ENCODE measurements at regions of chr11 and their contacts with region 1.

Region 1: GRCh38 chr11:94623120-94623735 is 56.1 kb downstream of the PIWIL4 start:
- DNase-seq: peak; percentile 67 to 87
- H3K4me3 ChIP-seq: no peak overlapping the region
- H3K27ac ChIP-seq: 0 out of 2 replicates have a peak overlapping the region, but pooled peaks have one; percentile 12
- H3K4me1 ChIP-seq: peaks cover 5% of the 10 kb centered on the region; the same call in 1 of the 2 replicates
- H3K27me3 ChIP-seq: no peaks in the 10 kb centered on the region
- CTCF ChIP-seq: peak; percentile 99

Region 2: GRCh38 chr11:93842461-93842860 is 780.8 kb before region 1 on chr11:
- CTCF ChIA-PET with region 1: no interaction called
- POLR2A ChIA-PET with region 1: no interaction called
- intact Hi-C with region 1: no loop called
- DNase-seq: peak; percentile 90 to 91
- H3K4me3 ChIP-seq: no peak overlapping the region
- H3K27ac ChIP-seq: no peak overlapping the region
- H3K4me1 ChIP-seq: peaks cover 10% of the 10 kb centered on the region
- H3K27me3 ChIP-seq: no peaks in the 10 kb centered on the region
- CTCF ChIP-seq: no peak

Region 3: DNA sequence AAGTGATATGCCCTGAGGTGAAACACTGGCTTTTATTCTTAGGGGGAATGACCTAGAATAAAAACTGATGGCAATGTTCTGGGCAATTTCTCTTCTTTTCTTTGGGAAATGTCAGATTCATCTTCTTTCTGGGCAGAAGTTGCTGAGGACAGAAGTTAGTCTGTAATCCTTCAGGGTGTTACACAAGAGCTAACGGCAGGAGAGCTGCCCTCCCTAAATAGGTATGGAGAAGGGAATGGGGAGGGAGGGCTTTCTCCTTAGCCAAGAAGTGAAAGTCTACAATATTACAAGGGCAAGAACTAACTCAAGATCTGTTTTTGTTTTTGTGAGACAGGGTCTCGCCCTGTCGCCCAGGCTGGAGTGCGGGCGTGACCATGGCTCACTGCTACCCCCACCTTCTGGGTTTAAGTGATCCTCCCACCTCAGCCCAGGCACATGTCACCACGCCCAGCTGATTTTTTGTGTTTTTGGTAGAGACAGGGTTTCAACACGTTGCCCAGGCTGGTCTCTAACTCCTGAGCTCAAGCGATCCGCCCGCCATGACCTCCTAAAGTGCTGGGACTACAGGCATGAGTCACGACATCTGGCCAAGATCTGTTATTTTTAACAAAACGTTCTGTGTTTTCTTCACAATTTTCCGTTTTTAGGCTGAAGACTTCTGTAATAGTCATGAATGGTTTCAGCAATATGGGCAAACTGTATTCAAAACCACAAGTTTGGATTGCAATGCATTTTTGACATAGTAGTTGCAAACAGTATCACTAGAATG is 48.9 kb before region 1 on chr11:
- CTCF ChIA-PET with region 1: no interaction called
- POLR2A ChIA-PET with region 1: no interaction called
- intact Hi-C with region 1: no loop called
- DNase-seq: no peak
- H3K4me3 ChIP-seq: no peak overlapping the region
- H3K27ac ChIP-seq: no peak overlapping the region
- H3K4me1 ChIP-seq: no peaks in the 10 kb centered on the region
- H3K27me3 ChIP-seq: no peaks in the 10 kb centered on the region
- CTCF ChIP-seq: no peak

Region 4: GRCh38 chr11:94664346-94664745 is 41.1 kb after region 1 on chr11:
- CTCF ChIA-PET with region 1: interaction called, 6 read pairs
- POLR2A ChIA-PET with region 1: interaction called, 17 read pairs
- intact Hi-C with region 1: no loop called
- DNase-seq: peak; percentile 41 to 86
- H3K4me3 ChIP-seq: no peak overlapping the region
- H3K27ac ChIP-seq: peak overlapping the region; percentile 65
- H3K4me1 ChIP-seq: peaks cover 48% of the 10 kb centered on the region
- H3K27me3 ChIP-seq: no peaks in the 10 kb centered on the region
- CTCF ChIP-seq: no peak

Region 5: GRCh38 chr11:94747146-94748080 is 124.2 kb after region 1 on chr11:
- CTCF ChIA-PET with region 1: interaction called, 6 read pairs
- POLR2A ChIA-PET with region 1: interaction called, 4 read pairs
- intact Hi-C with region 1: loop called (anchors 1 kb)
- DNase-seq: peak; percentile 75 to 100
- H3K4me3 ChIP-seq: peak overlapping the region; percentile 22; the same call in 1 of the 2 replicates
- H3K27ac ChIP-seq: peak overlapping the region; percentile 99
- H3K4me1 ChIP-seq: peaks cover 96% of the 10 kb centered on the region
- H3K27me3 ChIP-seq: no peaks in the 10 kb centered on the region
- CTCF ChIP-seq: no peak

Region 6: DNA sequence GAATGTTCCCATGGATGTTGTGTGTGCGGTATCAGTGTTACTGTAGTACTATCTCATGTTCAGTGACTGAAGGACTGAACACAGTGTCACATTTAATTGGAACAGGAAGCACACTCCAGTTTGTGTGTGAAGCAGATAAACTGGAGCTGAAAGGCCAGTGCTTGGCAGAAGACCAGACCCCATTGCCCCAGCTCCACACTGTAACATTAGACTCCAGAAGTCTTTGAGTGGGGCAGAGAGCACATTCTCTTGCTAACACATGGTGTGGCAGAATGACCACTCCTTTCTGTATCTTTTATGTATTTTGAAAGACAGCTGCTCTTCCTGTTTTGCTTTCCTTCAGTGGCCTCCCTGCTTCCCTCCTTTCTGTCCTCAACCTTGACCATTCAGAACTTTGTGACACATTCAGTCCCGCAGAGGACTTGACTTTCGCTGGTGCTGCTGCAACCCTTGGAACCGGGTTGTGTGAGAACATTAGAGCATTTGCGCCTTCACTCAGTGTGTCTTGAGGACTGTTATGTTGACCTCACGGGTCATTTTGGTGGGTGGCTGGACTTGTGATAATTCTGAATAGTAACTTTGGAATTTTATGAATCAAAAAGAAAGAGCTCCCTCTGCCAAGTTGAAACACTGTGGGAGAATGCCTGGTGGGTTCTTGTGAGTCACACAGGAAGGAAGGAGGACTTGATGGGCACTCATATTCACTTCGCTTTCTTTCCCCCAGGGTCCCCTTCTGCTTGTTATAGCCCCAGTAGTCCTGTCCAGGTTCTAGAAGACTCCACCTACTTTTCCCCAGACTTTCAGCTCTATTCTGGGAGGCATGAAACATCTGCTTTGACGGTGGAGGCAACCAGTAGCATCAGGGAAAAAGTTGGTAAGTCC is 171.3 kb after region 1 on chr11:
- CTCF ChIA-PET with region 1: interaction called, 4 read pairs
- POLR2A ChIA-PET with region 1: no interaction called
- intact Hi-C with region 1: loop called (anchors 1 kb)
- DNase-seq: peak; percentile 70 to 97
- H3K4me3 ChIP-seq: peak overlapping the region; percentile 34
- H3K27ac ChIP-seq: peak overlapping the region; percentile 91
- H3K4me1 ChIP-seq: peaks cover 76% of the 10 kb centered on the region
- H3K27me3 ChIP-seq: no peaks in the 10 kb centered on the region
- CTCF ChIP-seq: no peak

Region 7: DNA sequence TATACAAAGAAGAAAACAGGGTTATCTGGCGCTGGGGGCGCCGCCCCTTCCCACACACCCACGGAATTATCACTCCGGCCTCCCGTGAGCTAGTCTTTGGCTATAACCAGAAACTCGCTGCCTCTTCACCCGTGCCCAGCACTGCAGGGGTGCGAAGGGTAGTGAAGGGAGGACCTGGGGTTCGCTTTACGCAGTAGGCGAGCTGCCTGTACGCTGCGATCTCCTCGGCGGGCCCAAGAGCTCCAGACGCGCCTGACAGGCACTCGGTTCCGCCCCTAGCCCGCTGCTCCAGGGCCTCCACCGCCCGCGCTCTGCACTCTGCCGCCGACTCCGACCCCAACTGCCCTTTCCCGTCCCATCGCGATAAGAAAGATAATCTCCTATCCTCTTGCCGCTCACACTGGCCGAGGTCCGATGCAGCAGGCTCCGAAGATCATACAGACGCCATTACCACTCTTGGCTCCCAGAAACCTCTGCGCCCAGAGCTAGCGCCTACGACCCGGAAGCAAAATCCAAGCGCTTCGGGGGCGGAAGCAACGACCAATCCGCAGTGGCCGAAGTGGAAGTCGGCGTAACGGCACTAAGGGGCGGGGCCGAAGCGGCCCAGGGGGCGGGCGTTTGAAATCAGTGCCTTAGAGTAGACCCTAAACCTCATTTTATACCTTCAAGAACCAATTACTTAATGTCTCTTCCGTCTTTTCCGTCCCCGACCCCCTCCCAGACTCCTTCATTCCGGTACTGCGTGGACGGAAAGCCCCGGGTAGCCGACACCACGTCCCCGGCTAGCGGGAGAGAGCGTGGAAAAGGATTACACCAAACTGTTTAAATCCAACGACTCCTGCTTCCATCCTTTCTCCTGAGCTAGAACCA is 350.1 kb after region 1 on chr11 and contains the starts of genes CWC15 and KDM4D:
- CTCF ChIA-PET with region 1: interaction called, 5 read pairs
- POLR2A ChIA-PET with region 1: no interaction called
- intact Hi-C with region 1: loop called (anchors 1 kb)
- DNase-seq: peak; percentile 88 to 91
- H3K4me3 ChIP-seq: peak within 1 kb of the TSS; percentile 76
- H3K27ac ChIP-seq: peak within 1 kb of the TSS; percentile 44
- H3K4me1 ChIP-seq: peaks cover 11% of the 10 kb centered on the region
- H3K27me3 ChIP-seq: no peaks in the 10 kb centered on the region
- CTCF ChIP-seq: no peak
- total RNA-seq, gene CWC15: 50.9 and 54.2 TPM in 2 replicates
- total RNA-seq, gene KDM4D: 0.85 and 1.1 TPM in 2 replicates

Region 8: DNA sequence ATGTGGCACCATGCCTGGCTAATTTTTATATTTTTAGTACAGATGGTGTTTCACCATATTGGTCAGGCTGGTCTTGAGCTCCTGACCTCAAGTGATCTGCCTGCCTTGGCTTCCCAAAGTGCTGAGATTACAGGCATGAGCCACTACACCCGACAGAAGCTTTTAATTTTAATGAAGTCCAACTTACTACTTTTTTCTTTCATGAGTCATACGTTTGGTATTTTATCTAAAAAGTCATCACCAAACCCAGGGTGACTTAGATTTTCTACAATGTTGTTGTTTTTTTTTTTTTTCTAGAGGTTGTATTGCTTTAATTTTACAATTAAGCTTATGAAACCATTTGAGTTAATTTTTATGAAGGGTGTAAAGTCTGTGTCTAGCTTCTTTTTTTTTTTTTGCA is 1801.5 kb after region 1 on chr11:
- CTCF ChIA-PET with region 1: no interaction called
- POLR2A ChIA-PET with region 1: interaction called, 3 read pairs
- intact Hi-C with region 1: loop called (anchors 10 kb)
- DNase-seq: peak; percentile 5 to 75
- H3K4me3 ChIP-seq: no peak overlapping the region
- H3K27ac ChIP-seq: no peak overlapping the region
- H3K4me1 ChIP-seq: peaks cover 10% of the 10 kb centered on the region; the same call in 1 of the 2 replicates
- H3K27me3 ChIP-seq: no peaks in the 10 kb centered on the region
- CTCF ChIP-seq: no peak

Measured in PC-9 (cell line).